Cardiac septum (tissue), 1 donor: ENCODE measurements at regions of chr18 and their contacts with region 1.

Region 1: DNA sequence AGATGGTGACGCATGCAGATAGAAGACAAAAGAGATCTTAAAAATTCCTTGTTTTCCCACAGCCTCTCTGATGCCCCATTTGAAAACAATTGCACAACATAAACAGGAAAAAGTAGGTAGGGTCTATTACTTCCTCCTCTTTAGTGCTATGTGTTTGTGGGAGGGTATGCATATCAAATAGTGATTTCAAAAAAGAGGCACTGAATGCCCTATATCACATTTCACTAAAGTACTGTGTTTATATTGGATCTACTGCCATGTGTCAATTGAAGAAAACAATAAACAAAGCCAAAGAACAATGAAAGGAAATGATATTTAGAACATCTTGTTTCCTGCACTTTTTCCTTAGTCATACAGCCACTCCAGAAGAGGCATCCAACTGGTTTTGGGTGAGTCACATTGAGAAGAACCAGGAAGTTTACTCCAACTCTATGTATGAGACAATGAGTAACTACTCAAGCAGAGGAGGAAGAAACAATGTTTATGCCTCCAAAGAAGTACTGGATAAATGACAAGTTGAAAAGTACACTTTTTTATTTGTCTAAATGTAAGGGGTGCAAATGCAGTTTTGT is 583.6 kb downstream of the FBXO15 start:
- DNase-seq: no peak

Region 2: GRCh38 chr18:73458186-73458964 is 105.6 kb before region 1 on chr18:
- intact Hi-C with region 1: loop called (anchors 5 kb)
- DNase-seq: no peak